Ascending aorta (tissue), 2 donors: ENCODE measurements at regions of chr13 and their contacts with region 1.

Region 1: DNA sequence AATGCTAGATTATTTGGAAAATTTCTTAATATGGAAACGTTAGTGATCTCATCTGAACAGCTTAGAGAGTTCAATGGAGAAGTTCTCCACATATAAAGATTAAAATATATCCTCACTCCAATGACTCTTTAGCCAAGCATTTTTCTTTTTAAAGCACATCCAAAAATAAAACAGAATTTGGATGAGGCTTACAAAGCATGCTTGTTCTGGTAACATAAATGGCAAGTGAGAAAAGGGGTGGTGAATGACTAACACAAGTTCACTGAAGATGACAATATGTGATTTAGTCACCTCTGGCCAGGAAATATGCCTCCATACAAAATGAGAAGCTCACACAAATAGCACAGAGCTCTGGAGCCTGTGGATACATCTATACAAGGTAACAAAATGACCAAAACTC is 253.0 kb downstream of the PCDH20 start:
- DNase-seq: no peak
- H3K4me3 ChIP-seq: no peak overlapping the region
- H3K27ac ChIP-seq: peak overlapping the region; percentile 68 to 69
- H3K4me1 ChIP-seq: peaks cover 0 to 14% of the 10 kb centered on the region in 2 donors
- H3K27me3 ChIP-seq: no peaks in the 10 kb centered on the region
- CTCF ChIP-seq: no peak

Region 2: DNA sequence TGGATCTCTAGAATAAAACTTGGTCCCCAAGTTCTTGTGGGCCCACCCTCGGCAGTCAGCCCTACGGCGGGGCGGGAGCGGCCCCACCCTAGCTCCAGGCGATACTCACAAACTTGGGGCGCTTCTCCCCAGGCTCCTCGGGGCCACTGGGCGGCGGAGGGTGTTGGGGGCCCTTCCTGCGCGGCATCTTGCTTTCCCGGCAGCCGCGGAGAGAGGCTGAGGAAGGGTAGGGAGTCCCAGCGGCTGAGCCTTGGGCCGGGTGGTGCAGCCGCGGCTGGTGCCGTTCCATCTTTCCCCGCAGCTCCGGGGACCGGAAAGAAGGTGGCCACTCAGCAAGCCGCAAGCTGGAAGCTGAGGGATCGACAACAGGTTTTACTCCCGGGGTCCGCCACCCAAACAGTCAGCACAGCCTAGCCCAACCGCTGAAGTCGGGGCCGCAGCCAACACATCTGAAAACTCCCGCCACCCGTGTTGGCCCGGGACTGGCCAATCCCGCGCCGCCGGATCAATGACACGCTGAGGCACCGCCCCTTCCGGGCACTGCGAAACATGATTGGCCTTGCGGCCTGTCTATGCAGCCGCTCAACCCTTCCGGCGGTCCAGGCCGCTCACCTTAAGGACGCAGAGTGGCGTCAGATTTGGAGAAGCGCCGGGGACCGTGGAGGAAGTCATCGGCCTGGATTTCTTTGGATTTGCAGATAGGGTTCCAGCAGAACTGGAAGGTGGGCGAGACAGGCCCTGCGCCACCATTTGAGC is 999.0 kb before region 1 on chr13 and contains the start of gene DIAPH3:
- intact Hi-C with region 1: loop called (anchors 10 kb)
- DNase-seq: peak; percentile 89 to 97
- H3K4me3 ChIP-seq: peak within 1 kb of the TSS; percentile 84 to 86
- H3K27ac ChIP-seq: peak within 1 kb of the TSS; percentile 82 to 96
- H3K4me1 ChIP-seq: peaks cover 0 to 15% of the 10 kb centered on the region in 2 donors
- H3K27me3 ChIP-seq: no peaks in the 10 kb centered on the region
- CTCF ChIP-seq: no peak
- total RNA-seq, gene DIAPH3: 0.32 TPM

Region 3: DNA sequence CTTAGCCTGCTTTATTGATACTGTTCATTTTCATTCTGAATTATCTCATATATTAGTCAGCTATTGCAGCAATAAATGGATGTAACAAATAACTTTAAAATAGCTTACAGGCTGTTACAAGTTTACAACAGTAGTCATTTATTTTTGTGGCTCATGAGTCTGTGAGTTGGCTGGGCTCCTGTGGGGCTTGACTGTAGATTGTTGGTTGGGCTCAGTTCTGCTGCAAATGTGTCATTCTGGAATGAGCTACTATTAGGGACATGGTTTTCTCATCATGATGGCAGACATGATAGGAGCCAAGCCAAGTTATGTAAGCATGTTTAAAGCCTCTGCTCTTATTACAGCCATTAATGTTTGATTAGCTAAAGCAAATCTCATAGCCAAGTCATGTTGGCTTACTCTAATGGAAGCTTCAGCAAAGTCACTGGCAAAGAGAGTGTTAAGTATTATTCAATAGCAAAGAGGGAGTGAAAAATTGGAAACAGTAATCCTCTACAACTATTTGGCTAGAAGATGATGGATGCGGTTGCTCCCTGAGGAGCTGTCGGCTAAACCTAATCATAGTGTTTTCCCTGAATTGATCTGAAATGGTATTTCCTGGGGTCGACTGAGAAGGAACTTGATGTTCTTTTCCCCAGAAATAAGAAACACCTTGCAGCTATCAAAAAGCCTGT is 374.3 kb before region 1 on chr13:
- intact Hi-C with region 1: loop called (anchors 10 kb)
- DNase-seq: peak in 1 of 2 donors; percentile 72
- H3K4me3 ChIP-seq: no peak overlapping the region
- H3K27ac ChIP-seq: no peak overlapping the region
- H3K4me1 ChIP-seq: peaks cover 0 to 9% of the 10 kb centered on the region in 2 donors
- H3K27me3 ChIP-seq: no peaks in the 10 kb centered on the region
- CTCF ChIP-seq: no peak